ACHN (cell line): ENCODE measurements at regions of chr20 and their contacts with region 1.

Region 1: DNA sequence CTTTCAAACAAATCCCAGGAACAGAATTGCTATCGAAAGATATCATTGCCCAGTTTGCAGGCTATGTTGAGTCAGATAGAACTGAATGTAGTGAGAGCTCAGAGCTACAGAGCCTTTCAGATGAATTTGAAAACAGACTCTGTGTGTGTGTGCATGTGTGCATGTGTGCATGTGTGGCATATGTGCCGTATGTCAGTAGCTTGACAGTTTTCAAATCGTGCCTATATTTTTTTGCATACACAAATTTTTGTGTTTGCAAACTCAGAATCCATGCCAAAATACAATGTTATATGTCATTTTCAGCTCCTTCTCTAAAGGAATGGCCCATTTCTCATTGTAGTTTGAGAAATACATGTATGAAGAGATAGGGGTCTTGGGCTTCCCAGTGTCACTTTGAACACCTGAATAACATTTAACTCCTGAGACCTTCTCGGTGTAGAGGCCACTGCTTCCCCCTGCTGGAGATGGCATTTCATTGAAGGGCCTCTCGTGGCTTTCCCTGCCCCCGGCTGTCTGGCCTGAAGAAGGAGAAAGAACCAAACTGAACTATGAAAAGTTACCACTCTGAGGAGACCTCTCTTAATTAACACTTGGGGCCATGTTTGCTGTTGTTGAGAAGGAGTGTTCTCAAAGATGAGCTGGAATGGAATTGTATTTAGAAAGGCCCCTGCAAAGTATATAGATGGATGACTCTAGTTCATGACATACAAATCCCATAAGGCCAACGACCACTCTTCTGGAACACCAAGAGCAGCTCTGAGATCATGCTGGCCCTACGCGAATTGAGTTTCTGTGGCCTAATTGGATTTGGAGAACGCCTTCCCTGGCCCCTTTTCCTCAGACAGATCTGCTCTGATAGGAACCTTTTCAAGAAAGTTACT is 58.7 kb downstream of the VAPB start:
- DNase-seq: peak; percentile 63

Region 2: DNA sequence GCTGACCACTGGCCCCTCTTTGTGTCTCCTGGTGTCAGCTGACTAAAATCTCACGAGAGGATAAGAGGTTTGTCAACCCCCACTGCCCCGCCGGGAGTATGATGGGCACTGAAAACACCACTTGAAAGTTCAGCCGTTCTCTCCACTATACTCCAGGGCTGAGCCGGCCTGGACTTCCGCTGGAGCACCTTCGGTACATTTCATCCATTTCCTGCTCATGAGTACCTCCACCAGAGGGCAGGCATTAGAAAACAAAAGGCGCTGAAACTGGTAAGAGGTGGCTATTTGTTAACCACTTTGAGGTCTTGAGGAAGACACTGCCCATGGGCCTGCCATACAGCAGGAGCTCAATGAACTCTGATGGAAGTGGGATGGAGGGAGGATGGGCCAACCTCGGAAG is 201.4 kb before region 1 on chr20:
- in situ Hi-C with region 1: loop called (anchors 10 kb)
- DNase-seq: peak; percentile 34

Region 3: DNA sequence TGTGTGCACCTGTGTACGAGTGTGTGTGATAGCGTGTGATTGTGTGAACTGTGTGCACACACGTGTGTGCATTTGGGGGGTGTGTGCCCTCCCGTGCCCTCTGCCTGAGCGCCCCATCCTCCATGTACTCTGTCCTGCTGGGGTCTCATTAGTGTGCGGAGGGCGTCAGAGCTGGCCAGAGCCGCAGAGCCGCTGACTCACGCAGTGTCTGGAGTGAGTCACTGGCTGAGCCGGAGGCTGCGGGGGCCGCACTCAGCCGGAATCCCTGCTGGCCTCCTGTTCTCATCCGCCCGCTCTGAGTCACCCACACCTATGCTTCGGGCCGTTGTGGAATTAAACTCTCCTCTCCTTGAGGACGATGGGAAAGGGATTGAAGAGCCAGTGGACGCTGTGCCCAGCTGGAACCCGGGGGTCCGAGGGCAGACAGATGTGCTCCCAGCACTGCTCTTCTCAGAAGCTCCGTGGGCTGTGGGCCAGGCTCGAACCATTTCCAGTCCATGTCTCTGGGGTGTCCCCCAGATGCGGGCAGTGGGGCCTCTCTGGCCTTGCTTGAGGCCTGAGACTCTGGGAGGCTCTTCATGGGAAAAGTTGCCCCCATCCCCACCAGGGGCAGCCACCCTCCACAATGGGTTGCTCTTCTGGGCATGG is 176.2 kb after region 1 on chr20:
- in situ Hi-C with region 1: no loop called
- DNase-seq: peak; percentile 86

Region 4: DNA sequence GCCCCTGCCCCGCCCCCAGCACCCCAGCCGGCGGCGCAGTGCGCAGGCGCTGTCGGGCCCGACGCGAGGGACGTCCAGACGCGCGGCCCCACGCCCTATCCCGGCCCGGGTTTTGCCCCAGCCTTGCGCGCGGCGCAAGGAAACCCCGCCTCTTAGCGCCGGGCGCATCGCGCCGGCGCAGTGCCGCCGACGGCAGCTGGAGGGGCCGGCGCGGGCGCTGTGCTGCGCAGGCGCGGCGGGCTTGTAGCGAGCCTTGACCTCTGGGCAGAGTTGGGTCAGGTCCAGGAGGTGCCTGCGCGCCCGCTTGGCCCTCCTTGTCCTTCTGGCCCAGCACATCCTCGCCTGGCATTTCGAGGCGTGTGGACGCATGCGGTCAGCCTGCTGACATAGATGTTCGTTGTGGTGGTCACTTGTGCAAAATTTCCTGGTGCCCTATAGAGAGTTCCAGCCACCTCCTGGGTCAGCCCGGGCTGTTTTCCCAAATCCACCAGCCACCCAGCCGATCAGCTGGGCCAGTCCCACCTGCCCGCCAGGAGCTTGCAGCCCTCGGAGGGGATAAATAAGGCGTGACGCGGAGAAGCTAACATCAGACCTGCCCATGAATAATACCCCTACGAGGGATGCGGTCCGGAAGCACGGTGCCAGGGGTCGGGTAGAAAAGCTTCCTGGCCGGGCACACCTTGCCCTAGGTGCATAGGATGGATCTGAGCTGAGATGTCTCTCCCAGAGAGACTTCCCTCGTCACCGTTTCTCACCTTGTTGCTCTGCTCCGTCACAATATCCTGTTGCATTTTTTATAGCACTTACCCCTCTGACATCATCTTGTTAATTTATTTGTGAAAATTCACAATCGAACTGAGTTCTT is 595.3 kb after region 1 on chr20:
- in situ Hi-C with region 1: no loop called
- DNase-seq: peak; percentile 91